Activated naive CD4-positive, alpha-beta T cell treated with anti-CD3 and anti-CD28 coated beads for 36 hours (primary cell): ENCODE measurements at regions of chr7 and their contacts with region 1.

Region 1: GRCh38 chr7:7772397-7772821 is 54.0 kb upstream of the RPA3 start:
- DNase-seq: peak; percentile 53
- H3K4me3 Mint-ChIP-seq: peak overlapping the region; percentile 69
- H3K27ac Mint-ChIP-seq: no peak overlapping the region
- H3K4me1 Mint-ChIP-seq: peaks cover 28% of the 10 kb centered on the region
- H3K27me3 Mint-ChIP-seq: no peaks in the 10 kb centered on the region

Region 2: DNA sequence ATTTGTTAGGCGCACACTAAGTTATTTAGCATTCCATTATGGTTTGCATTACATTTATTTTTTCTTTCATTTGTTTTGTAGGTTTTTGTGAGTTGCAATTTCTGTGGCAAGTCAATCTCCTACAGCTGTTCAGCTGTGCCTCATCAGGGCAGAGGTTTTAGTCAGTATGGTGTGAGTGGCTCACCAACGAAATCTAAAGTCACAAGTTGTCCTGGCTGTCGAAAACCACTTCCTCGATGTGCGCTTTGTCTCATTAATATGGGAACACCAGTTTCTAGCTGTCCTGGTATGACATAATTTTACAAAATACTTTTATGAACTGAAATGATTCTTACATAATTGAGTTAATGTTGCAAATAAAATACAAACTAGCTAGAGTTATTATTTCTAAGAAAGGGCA is 176.2 kb before region 1 on chr7:
- CTCF ChIA-PET with region 1: no interaction called
- intact Hi-C with region 1: no loop called
- DNase-seq: no peak
- H3K4me3 Mint-ChIP-seq: no peak overlapping the region
- H3K27ac Mint-ChIP-seq: no peak overlapping the region
- H3K4me1 Mint-ChIP-seq: no peaks in the 10 kb centered on the region
- H3K27me3 Mint-ChIP-seq: no peaks in the 10 kb centered on the region

Region 3: GRCh38 chr7:7789551-7789988 is 17.2 kb after region 1 on chr7:
- CTCF ChIA-PET with region 1: no interaction called
- intact Hi-C with region 1: loop called (anchors 2 kb)
- DNase-seq: no peak
- H3K4me3 Mint-ChIP-seq: no peak overlapping the region
- H3K27ac Mint-ChIP-seq: no peak overlapping the region
- H3K4me1 Mint-ChIP-seq: peaks cover 5% of the 10 kb centered on the region
- H3K27me3 Mint-ChIP-seq: no peaks in the 10 kb centered on the region

Region 4: DNA sequence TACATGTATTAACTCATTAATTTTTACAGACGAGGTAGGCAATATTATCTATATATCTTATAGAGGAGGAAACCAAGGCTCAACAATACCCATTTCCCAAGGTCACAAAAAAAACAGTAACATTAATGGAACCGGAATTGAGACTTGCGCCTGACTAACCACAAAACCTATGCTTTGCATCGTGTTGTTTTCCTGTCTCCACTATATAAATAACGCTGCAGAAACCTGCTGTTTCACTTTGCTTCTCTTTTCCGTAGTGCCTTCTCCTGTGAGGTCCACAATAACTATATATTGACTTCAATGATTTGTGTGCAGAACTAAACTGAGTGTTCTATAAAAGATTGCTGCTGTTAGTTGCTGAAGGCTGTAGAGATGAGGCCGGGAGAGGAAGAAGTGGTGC is 43.7 kb after region 1 on chr7:
- CTCF ChIA-PET with region 1: no interaction called
- intact Hi-C with region 1: loop called (anchors 2 kb)
- DNase-seq: peak; percentile 14
- H3K4me3 Mint-ChIP-seq: no peak overlapping the region
- H3K27ac Mint-ChIP-seq: no peak overlapping the region
- H3K4me1 Mint-ChIP-seq: peaks cover 32% of the 10 kb centered on the region
- H3K27me3 Mint-ChIP-seq: no peaks in the 10 kb centered on the region

Region 5: DNA sequence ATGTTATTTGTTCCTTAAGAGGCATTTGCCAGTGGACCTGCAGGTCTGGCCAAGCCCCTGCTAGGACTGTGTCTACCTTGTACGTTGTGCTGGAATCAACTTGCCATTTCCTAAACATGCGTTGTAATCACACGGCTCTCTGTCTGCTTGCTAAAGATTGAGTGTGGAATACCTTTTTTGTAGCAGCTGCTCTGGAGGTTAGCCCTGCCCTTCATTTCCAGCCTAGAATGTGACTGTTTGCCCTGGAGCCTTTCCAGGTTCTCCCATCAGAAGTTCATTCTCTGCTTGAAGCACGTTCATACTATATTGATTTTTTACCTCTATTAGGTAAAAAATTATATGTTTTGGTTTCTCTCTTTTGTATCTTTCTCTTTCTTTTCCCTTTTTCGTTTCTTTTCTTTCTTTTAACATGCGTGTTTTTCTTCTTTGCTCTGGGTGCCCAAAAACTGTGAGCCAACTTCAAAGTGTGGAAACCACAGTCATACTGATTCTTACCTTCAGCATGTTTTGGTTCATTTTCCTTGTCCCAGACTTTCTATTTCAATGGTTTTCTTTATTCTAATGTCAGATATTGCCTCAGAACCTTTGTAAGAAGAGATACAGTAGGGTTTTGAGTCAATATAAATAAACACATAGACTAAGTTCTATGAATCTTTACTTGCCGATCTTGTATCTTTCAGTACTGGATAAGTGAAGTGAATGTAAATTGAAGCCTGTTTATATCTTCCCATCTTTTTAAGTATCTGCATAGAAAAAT is 57.9 kb after region 1 on chr7:
- CTCF ChIA-PET with region 1: no interaction called
- intact Hi-C with region 1: loop called (anchors 1 kb)
- DNase-seq: peak; percentile 15
- H3K4me3 Mint-ChIP-seq: no peak overlapping the region
- H3K27ac Mint-ChIP-seq: no peak overlapping the region
- H3K4me1 Mint-ChIP-seq: peaks cover 18% of the 10 kb centered on the region
- H3K27me3 Mint-ChIP-seq: no peaks in the 10 kb centered on the region

Region 6: GRCh38 chr7:7920481-7920880 is 148.1 kb after region 1 on chr7:
- CTCF ChIA-PET with region 1: no interaction called
- intact Hi-C with region 1: loop called (anchors 1 kb)
- DNase-seq: peak; percentile 46
- H3K4me3 Mint-ChIP-seq: no peak overlapping the region
- H3K27ac Mint-ChIP-seq: no peak overlapping the region
- H3K4me1 Mint-ChIP-seq: peaks cover 24% of the 10 kb centered on the region
- H3K27me3 Mint-ChIP-seq: no peaks in the 10 kb centered on the region

Region 7: GRCh38 chr7:8015100-8015748 is 242.8 kb after region 1 on chr7:
- CTCF ChIA-PET with region 1: no interaction called
- intact Hi-C with region 1: loop called (anchors 1 kb)
- DNase-seq: no peak
- H3K4me3 Mint-ChIP-seq: peak overlapping the region; percentile 4
- H3K27ac Mint-ChIP-seq: peak overlapping the region; percentile 68
- H3K4me1 Mint-ChIP-seq: peaks cover 47% of the 10 kb centered on the region
- H3K27me3 Mint-ChIP-seq: no peaks in the 10 kb centered on the region